HEK293 (cell line): ENCODE measurements at regions of chr12 and their contacts with region 1.

Region 1: DNA sequence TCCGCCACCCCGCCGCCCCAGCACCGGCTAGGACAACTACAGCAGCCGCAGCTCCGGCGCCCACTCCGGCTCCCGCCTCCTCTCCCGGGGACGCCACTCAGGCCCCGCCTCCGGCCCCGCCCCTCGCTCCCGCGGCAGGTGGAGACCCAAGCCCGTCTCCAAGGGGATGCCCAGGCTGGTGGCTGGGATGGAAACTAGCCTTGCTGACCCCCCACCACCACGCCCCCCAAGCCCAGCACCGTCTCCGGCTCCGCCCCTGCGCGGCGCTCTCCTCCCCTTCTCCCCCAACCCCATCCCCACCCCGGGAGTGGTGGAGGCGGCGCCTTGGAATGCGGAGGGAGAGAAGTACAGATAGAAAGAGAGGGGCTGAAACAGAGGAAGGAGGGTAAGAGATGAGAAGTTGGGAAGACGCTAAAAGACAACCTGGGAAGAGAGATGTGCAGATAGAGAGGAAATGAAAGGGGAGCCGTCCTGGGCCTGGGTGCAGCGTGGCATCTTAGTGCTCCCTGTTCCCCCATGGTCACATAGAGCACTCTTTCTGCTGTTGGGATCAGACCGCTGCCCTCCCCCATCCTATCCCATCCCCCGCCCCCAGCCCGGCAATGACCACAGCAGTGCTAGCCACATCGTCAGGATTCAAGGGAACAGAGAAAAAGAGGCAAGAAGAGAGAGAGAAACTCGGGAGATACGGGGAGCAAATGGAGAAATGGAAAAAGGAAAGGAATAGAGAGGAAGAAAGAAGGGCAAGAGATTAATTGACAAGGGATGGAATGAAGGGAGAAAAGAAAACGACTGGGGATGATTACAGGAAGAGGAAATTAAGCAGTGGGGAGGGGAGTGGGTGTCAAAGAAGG is at the start of gene ITGA7:
- H3K4me3 ChIP-seq: peak within 1 kb of the TSS; percentile 48
- H3K27ac ChIP-seq: no peak within 1 kb of the TSS; the same call in 1 of the 2 replicates
- H3K4me1 ChIP-seq: no peaks in the 10 kb centered on the region; the same call in 1 of the 2 replicates
- CTCF ChIP-seq: no peak

Region 2: GRCh38 chr12:55659486-55660385 is 48.3 kb before region 1 on chr12:
- CTCF ChIA-PET with region 1: interaction called, 16 read pairs
- POLR2A ChIA-PET with region 1: no interaction called
- H3K4me3 ChIP-seq: no peak overlapping the region
- H3K27ac ChIP-seq: no peak overlapping the region
- H3K4me1 ChIP-seq: no peaks in the 10 kb centered on the region
- CTCF ChIP-seq: peak; percentile 64

Region 3: GRCh38 chr12:55681142-55682077 is 26.7 kb before region 1 on chr12:
- CTCF ChIA-PET with region 1: interaction called, 8 read pairs
- POLR2A ChIA-PET with region 1: interaction called, 12 read pairs
- H3K4me3 ChIP-seq: peak overlapping the region; percentile 26
- H3K27ac ChIP-seq: no peak overlapping the region; the same call in 1 of the 2 replicates
- H3K4me1 ChIP-seq: no peaks in the 10 kb centered on the region
- CTCF ChIP-seq: peak; percentile 95

Region 4: DNA sequence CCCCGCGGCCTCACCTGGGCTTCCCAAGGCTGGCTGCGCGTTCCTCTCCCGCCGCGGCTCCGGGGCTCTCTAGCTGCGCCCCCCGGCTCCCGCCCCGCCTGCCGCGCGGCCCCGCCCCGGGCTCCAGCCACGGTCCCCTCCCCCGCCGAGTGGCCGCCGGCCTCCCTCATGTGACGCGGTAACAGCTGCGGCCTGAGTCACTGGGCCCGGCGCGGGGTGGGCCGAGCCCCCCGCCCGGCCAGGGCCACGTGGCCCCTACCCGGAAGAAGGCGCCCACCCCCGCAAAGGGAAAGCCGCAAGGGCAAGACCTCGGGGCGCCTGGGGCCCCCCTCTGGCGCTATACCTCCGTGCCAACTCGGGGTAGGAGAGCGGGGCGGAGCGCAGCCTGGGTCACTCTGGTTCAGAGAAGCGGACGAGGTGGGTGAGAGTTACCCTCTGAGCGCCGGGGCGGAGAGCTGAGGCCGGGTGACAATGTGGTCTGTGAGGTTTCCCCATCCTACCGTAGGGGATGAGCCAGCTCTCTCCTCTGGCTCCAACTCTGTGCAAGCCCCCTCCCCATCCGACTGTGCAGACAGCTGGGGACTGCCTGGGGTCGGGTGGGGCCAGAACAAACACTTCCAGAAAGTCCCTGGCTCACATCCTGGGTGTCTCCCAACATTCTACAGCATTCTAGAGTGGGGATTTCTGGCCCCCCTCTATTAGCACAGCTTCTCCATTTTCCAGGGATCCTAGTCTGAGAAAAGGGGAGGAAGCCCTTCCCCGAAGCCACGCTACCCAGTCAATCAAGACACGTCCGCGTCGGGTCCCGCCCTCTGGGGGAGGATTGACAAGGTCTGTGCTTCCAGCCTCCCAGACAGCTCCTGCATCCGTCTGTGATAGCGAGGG is 21.1 kb after region 1 on chr12 and contains the start of gene CD63:
- CTCF ChIA-PET with region 1: interaction called, 21 read pairs
- POLR2A ChIA-PET with region 1: interaction called, 5 read pairs
- H3K4me3 ChIP-seq: peak within 1 kb of the TSS; percentile 77
- H3K27ac ChIP-seq: peak within 1 kb of the TSS; percentile 91
- H3K4me1 ChIP-seq: no peaks in the 10 kb centered on the region; the same call in 1 of the 2 replicates
- CTCF ChIP-seq: no peak

Region 5: DNA sequence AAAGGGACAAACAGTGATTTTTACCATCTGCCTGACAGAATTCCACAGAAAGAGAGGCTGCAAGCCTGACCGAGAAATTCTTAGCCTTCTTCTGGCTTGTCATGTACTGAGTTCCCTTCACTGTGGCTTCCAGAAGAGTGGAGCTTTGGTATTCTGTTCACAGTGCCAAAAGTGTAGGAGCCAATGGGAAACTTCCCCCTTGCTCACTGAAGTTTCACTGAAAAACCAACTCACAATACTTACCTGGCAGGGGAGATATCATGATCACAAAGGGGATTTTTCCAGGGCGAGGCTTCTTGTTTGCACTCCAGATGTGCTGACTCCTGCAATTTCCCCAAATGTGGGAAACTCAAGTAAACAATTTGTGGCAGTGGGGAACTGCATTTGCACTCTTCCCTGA is 166.4 kb after region 1 on chr12:
- CTCF ChIA-PET with region 1: no interaction called
- POLR2A ChIA-PET with region 1: no interaction called
- H3K4me3 ChIP-seq: no peak overlapping the region
- H3K27ac ChIP-seq: no peak overlapping the region
- H3K4me1 ChIP-seq: no peaks in the 10 kb centered on the region
- CTCF ChIP-seq: no peak